ENCODE measurements at regions of chr1 and their contacts with region 1.

Region 1: DNA sequence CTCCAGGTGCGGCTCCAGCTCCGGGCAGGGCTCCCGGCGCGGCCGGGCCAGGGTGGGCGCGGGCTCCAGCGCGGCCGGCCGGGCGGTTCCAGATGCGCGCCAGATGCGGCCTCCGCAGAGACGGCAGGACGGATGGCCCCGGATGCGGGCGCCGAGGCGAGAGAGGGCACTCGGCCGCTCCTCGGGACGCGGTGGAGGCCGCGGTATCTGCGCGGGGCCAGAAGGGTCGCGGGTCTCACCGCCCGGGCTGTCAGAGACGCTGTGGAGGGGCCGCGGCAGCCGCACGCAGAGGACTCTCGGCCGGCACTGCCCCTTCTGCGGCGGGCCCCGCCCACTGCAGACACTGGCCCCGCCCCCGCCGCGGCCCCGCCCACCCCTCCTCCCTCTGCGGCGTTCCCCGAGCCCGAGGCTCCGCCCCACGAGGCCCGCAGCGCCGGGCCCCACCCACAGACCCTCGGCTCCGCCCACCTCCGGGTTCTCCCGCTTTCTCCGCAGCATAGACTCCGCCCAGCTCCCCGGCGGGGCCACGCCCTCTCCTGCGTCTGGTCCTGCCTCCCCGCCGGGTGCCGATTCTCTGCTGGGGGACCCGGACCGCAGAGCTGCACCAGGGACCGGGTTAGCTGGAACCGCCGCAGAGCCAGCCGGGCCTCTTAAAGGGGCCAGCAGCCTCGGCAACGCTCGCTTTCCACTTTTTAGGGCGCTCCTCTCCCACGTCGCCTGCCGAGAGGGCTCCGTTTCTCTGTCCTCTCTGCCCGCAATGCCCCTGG is at the start of gene IFFO2:
- DNase-seq: peak; percentile 99
- ATAC-seq: peak; percentile 79 to 93 (median 80)
- H3K4me3 ChIP-seq: peak within 1 kb of the TSS; percentile 62
- H3K4me3 Mint-ChIP-seq: peak within 1 kb of the TSS; percentile 87
- H3K27ac ChIP-seq: peak within 1 kb of the TSS; percentile 49
- H3K27ac Mint-ChIP-seq: peak within 1 kb of the TSS; percentile 85 to 100
- H3K4me1 ChIP-seq: peaks cover 52% of the 10 kb centered on the region
- H3K4me1 Mint-ChIP-seq: peaks cover 52 to 57% of the 10 kb centered on the region in 2 donors
- H3K27me3 ChIP-seq: no peaks in the 10 kb centered on the region
- H3K27me3 Mint-ChIP-seq: peaks cover 0 to 4% of the 10 kb centered on the region in 2 donors
- CTCF ChIP-seq: no peak
- total RNA-seq, gene IFFO2: 52.4 to 105 (median 66.5) TPM

Region 2: GRCh38 chr1:18649693-18650370 is 306.7 kb before region 1 on chr1:
- intact Hi-C with region 1: no loop called
- DNase-seq: no peak
- ATAC-seq: no peak
- H3K4me3 ChIP-seq: no peak overlapping the region
- H3K4me3 Mint-ChIP-seq: no peak overlapping the region
- H3K27ac ChIP-seq: no peak overlapping the region
- H3K27ac Mint-ChIP-seq: no peak overlapping the region
- H3K4me1 ChIP-seq: no peaks in the 10 kb centered on the region
- H3K4me1 Mint-ChIP-seq: peaks cover 0 to 11% of the 10 kb centered on the region in 2 donors
- H3K27me3 ChIP-seq: peaks cover 41% of the 10 kb centered on the region
- H3K27me3 Mint-ChIP-seq: peaks cover 65 to 75% of the 10 kb centered on the region in 2 donors
- CTCF ChIP-seq: no peak

Region 3: GRCh38 chr1:18926315-18927081 is 30.1 kb before region 1 on chr1:
- intact Hi-C with region 1: loop called (anchors 1 kb)
- DNase-seq: peak; percentile 76 to 91
- ATAC-seq: peak; percentile 84 to 89 (median 85)
- H3K4me3 ChIP-seq: peak overlapping the region; percentile 45
- H3K4me3 Mint-ChIP-seq: peak overlapping the region; percentile 93
- H3K27ac ChIP-seq: peak overlapping the region; percentile 95
- H3K27ac Mint-ChIP-seq: peak overlapping the region; percentile 93 to 95
- H3K4me1 ChIP-seq: peaks cover 97% of the 10 kb centered on the region
- H3K4me1 Mint-ChIP-seq: peaks cover 67 to 82% of the 10 kb centered on the region in 2 donors
- H3K27me3 ChIP-seq: no peaks in the 10 kb centered on the region
- H3K27me3 Mint-ChIP-seq: no peaks in the 10 kb centered on the region
- CTCF ChIP-seq: no peak

Region 4: DNA sequence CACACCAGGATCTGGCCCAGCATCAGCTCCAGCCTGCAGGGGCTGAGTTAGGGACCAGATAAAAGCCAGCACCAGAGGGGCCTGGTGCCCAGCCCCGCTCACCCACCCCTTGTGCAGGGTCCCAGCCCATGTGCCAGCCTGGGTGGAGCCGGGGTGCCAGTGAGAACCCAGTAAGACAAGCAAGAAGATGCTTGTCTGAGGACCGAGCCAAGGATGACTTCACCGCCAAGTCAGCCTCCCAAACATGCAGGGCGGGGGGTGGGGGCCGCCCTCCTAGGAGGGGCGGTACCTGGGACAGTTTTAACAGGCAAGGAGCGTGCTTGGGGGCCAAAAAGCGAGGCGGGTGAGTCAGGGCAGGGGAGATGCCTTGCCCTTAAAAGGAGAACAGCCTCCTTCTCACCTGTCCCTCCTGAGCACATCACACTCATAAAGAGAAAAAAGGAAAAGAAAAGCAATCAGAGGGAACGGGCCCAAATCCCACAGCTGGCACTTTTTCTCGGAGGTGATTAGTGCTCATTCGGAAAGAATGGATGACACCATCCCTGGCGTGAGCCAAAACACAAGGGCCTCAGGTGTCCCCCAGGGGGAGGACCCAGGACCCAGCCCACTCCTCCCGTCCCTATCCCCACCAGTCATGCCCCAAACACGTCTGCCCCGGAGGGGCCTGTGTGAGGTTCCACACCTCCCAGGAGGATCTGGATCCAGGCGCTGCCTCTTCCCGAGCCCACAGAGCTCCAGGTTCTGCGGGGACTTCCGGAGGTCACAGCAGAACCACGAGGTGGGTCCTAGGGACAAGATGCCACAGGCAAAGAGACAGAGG is 77.5 kb after region 1 on chr1:
- intact Hi-C with region 1: no loop called
- DNase-seq: no peak
- ATAC-seq: no peak
- H3K4me3 ChIP-seq: no peak overlapping the region
- H3K4me3 Mint-ChIP-seq: no peak overlapping the region
- H3K27ac ChIP-seq: no peak overlapping the region
- H3K27ac Mint-ChIP-seq: no peak overlapping the region
- H3K4me1 ChIP-seq: no peaks in the 10 kb centered on the region
- H3K4me1 Mint-ChIP-seq: no peaks in the 10 kb centered on the region
- H3K27me3 ChIP-seq: peaks cover 2% of the 10 kb centered on the region
- H3K27me3 Mint-ChIP-seq: peaks cover 8 to 9% of the 10 kb centered on the region in 2 donors
- CTCF ChIP-seq: no peak

Region 5: GRCh38 chr1:19044975-19045831 is 88.7 kb after region 1 on chr1:
- intact Hi-C with region 1: no loop called
- DNase-seq: peak in 1 of 2 donors; percentile 33
- ATAC-seq: peak; percentile 64 to 86 (median 65)
- H3K4me3 ChIP-seq: no peak overlapping the region
- H3K4me3 Mint-ChIP-seq: no peak overlapping the region
- H3K27ac ChIP-seq: no peak overlapping the region
- H3K27ac Mint-ChIP-seq: no peak overlapping the region
- H3K4me1 ChIP-seq: peaks cover 8% of the 10 kb centered on the region
- H3K4me1 Mint-ChIP-seq: peaks cover 7 to 13% of the 10 kb centered on the region in 2 donors
- H3K27me3 ChIP-seq: peaks cover 6% of the 10 kb centered on the region
- H3K27me3 Mint-ChIP-seq: peaks cover 26 to 45% of the 10 kb centered on the region in 2 donors
- CTCF ChIP-seq: no peak

Measured in natural killer cell (primary cell).